ENCODE measurements at regions of chr6 and their contacts with region 1.

Region 1: DNA sequence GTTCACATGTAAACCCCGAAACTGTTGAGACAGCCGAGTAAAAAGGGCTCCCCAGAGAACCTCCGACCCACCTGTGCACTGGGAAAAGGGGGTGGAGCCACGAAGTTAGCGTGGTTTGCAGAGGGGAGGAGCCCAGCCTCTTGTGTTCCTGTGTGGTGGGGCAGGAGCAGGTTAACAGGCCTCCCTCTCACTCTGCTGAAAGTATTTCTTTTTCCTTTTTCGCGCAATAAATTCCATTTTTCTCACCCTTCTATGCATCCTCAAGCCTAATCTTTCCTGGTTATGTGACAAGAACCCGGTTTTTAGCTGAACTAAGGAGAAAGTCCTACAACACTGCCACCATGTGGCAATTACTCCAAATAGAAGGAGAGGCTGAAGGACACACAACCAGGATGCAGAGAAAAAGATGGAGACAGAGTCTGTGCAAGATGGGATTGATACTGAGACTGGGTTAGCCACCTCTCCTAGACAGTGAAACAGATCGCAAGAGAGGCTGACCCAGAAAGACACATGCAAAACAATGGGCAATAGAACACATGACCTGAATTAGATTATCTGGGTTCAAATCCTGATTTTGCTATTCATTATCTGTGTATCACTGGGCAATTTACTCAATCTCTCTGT is 168.7 kb upstream of the PRSS16 start:
- DNase-seq: no peak
- H3K4me3 ChIP-seq: no peak overlapping the region
- H3K27ac ChIP-seq: no peak overlapping the region
- H3K4me1 ChIP-seq: no peaks in the 10 kb centered on the region
- H3K27me3 ChIP-seq: no peaks in the 10 kb centered on the region
- CTCF ChIP-seq: peak in 2 of 3 experiments; percentile 34 to 52

Region 2: GRCh38 chr6:26531897-26532296 is 546.9 kb before region 1 on chr6:
- intact Hi-C with region 1: no loop called
- DNase-seq: peak in 1 of 2 donors; percentile 45
- H3K4me3 ChIP-seq: no peak overlapping the region
- H3K27ac ChIP-seq: peak overlapping the region; percentile 79 to 85
- H3K4me1 ChIP-seq: peaks cover 5 to 22% of the 10 kb centered on the region in 2 donors
- H3K27me3 ChIP-seq: no peaks in the 10 kb centered on the region
- CTCF ChIP-seq: no peak

Region 3: GRCh38 chr6:26607434-26608230 is 471.2 kb before region 1 on chr6:
- intact Hi-C with region 1: loop called (anchors 1 kb)
- DNase-seq: no peak
- H3K4me3 ChIP-seq: peak overlapping the region; percentile 10 to 27
- H3K27ac ChIP-seq: no peak overlapping the region
- H3K4me1 ChIP-seq: no peaks in the 10 kb centered on the region
- H3K27me3 ChIP-seq: no peaks in the 10 kb centered on the region
- CTCF ChIP-seq: peak in 2 of 3 experiments; percentile 31 to 49